Activated T-helper 2 cell treated with anti-CD3 and anti-CD28 coated beads, Interferon-gamma antibody, Interleukin-2, Interleukin-4, amounts not matched to agents 10 μg/mL and 5 μg/mL and 100 μg/mL, durations not matched to agents 14 hours and 24 hours and 36 hours (primary cell): ENCODE measurements at regions of chr9 and their contacts with region 1.

Region 1: DNA sequence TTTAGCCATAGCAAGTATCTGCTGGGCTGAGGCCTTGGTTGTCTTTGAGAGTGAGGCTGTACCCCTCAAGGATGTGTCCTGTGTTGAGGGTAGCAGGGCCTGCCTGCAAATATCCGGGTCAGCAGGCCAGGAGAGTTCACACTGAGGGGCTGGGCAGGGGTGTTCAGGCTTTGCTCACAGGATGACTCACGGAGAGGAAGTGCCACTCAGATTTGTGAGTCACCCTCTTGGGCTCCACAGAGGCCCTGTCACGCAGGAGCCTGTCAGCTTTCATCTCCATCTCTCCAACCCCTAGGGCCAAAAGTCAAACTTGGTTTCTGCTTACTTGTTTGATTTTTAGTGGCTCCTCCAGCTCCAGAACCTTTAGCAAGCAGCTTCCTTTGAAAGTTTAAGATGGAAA is 211.5 kb downstream of the SEC61B start:
- DNase-seq: peak; percentile 54
- H3K4me3 Mint-ChIP-seq: no peak overlapping the region
- H3K27ac Mint-ChIP-seq: peak overlapping the region; percentile 61
- H3K4me1 Mint-ChIP-seq: peaks cover 36% of the 10 kb centered on the region
- H3K27me3 Mint-ChIP-seq: no peaks in the 10 kb centered on the region

Region 2: DNA sequence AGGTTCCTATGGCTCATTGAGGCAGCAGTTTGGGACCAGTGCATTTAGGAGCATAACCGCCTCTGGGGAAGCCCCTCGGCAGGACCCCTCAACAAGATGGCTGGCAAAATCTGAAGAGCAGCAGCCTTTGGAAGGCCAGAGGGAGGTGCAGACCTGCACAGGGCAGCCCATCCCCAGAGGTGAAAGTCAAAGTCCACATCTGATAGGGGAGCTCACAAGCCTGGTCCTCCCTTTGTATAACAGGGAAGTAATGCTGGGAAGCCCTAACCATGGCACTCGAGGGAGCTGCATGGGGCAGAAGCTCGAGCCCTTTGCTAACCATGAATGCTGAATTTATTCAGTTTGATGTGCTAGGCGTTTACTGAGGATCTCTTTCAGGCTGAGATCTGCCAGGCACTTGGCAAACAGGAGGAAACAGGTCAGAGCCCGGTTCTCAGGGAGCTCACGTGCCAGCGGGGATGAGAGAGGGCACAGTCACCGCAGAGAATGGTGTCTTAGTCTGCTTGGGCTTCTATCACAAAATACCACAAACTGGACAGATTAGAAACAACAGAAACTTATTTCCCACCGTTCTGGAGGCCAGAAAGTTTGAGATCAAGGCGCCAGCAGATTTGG is 838.9 kb before region 1 on chr9:
- intact Hi-C with region 1: no loop called
- DNase-seq: no peak
- H3K4me3 Mint-ChIP-seq: no peak overlapping the region
- H3K27ac Mint-ChIP-seq: no peak overlapping the region
- H3K4me1 Mint-ChIP-seq: no peaks in the 10 kb centered on the region
- H3K27me3 Mint-ChIP-seq: no peaks in the 10 kb centered on the region

Region 3: DNA sequence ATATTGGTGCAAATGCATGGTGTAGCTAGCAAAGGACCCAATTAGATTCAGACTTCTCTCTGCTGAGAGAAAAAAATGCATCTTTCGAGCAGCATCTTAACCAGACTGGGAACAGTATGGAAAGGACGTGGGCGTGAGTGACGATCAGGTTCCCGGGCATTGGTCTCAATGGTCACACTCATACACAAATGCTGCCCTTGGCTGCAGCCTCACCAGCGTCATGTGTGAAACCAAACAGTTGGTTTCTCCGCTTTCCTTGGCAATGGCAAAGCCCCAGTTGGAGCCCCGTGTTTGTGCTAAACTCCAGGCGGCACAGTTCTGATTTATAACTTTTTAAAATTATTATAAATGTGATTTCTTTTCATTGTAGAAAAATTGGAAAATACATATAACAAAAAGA is 26.4 kb after region 1 on chr9:
- intact Hi-C with region 1: no loop called
- DNase-seq: no peak
- H3K4me3 Mint-ChIP-seq: no peak overlapping the region
- H3K27ac Mint-ChIP-seq: no peak overlapping the region
- H3K4me1 Mint-ChIP-seq: peaks cover 6% of the 10 kb centered on the region
- H3K27me3 Mint-ChIP-seq: peaks cover 3% of the 10 kb centered on the region

Region 4: DNA sequence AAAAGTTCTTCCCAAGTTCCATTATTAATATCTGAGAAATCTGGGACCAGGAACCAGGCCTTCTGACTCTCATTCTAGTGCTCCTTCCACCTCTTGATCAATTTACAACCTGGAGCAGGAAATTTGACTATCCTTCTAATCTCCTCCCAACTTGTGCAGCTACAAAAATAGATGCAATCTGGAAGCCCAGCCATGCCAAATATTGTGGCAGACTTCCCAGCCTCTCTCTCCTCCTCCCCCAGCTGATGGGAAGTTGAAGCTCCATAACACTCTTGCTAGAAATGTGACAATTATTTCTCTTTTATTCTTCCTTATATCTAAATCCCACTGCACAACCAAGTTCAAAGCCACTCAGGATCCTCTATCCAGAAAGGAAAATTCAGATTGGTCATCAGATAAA is 40.6 kb after region 1 on chr9:
- intact Hi-C with region 1: loop called (anchors 5 kb)
- DNase-seq: no peak
- H3K4me3 Mint-ChIP-seq: no peak overlapping the region
- H3K27ac Mint-ChIP-seq: no peak overlapping the region
- H3K4me1 Mint-ChIP-seq: peaks cover 33% of the 10 kb centered on the region
- H3K27me3 Mint-ChIP-seq: no peaks in the 10 kb centered on the region

Region 5: GRCh38 chr9:99601571-99602111 is 168.1 kb after region 1 on chr9:
- intact Hi-C with region 1: loop called (anchors 5 kb)
- DNase-seq: no peak
- H3K4me3 Mint-ChIP-seq: no peak overlapping the region
- H3K27ac Mint-ChIP-seq: no peak overlapping the region
- H3K4me1 Mint-ChIP-seq: peaks cover 16% of the 10 kb centered on the region
- H3K27me3 Mint-ChIP-seq: no peaks in the 10 kb centered on the region